ENCODE measurements at regions of chr4 and their contacts with region 1.

Region 1: DNA sequence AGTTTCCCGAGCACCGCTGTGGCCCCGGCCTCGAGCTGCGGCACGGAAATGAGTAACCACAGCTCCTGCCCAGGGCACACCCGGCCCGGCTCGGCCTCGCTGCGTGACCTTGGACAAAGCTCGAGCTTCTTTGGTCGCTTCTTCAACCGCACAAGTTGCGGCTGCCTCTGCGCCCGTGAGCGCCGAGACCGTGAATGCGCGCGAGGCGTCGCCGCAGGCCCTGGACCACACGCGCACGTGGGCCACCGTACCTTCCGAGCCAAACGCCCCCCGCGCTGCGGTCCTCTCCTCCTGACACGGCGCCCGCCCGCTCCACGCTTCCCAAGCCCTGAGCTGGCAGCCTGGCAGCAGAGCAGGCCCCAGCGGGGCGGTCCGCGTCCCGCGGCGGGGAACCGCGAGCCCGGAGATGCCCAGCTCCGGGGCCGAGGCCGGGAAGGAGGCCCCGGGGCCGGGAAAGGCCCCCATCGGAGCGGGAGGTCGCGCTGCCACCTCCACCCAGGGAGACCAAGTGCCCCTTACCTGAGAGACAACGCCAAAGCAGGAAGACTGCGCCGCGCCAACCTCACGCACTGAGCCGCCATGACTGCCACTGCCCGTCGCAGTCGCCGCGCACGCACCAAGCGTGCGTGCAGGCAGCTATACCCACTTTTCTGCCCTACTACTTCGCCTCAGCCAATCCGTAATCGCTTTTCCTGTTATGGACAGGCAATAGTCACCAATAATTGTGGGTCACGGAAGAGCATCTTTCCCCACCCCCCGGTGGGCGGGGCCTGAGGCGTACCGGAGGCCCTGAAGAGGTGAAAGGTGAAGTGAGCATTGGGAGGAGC is at the start of gene GRPEL1:
- DNase-seq: peak; percentile 100
- ATAC-seq: peak; percentile 88
- H3K4me3 ChIP-seq: peak within 1 kb of the TSS; percentile 76
- H3K4me3 Mint-ChIP-seq: peak within 1 kb of the TSS; percentile 97
- H3K27ac ChIP-seq: peak within 1 kb of the TSS; percentile 71 to 78
- H3K27ac Mint-ChIP-seq: peak within 1 kb of the TSS; percentile 93
- H3K4me1 ChIP-seq: peaks cover 45% of the 10 kb centered on the region
- H3K4me1 Mint-ChIP-seq: peaks cover 60% of the 10 kb centered on the region
- H3K27me3 ChIP-seq: no peaks in the 10 kb centered on the region
- H3K27me3 Mint-ChIP-seq: no peaks in the 10 kb centered on the region
- CTCF ChIP-seq: no peak
- total RNA-seq, gene GRPEL1: 55.6 to 58.6 TPM

Region 2: GRCh38 chr4:6688879-6689505 is 378.7 kb before region 1 on chr4:
- CTCF ChIA-PET with region 1: no interaction called
- POLR2A ChIA-PET with region 1: interaction called, 11 read pairs
- intact Hi-C with region 1: no loop called
- DNase-seq: peak; percentile 48 to 85 (median 69)
- ATAC-seq: peak; percentile 75
- H3K4me3 ChIP-seq: peak overlapping the region; percentile 58
- H3K4me3 Mint-ChIP-seq: peak overlapping the region; percentile 89
- H3K27ac ChIP-seq: peak overlapping the region; percentile 34 to 82
- H3K27ac Mint-ChIP-seq: peak overlapping the region; percentile 91
- H3K4me1 ChIP-seq: peaks cover 90% of the 10 kb centered on the region
- H3K4me1 Mint-ChIP-seq: peaks cover 71% of the 10 kb centered on the region
- H3K27me3 ChIP-seq: no peaks in the 10 kb centered on the region
- H3K27me3 Mint-ChIP-seq: no peaks in the 10 kb centered on the region
- CTCF ChIP-seq: no peak

Region 3: DNA sequence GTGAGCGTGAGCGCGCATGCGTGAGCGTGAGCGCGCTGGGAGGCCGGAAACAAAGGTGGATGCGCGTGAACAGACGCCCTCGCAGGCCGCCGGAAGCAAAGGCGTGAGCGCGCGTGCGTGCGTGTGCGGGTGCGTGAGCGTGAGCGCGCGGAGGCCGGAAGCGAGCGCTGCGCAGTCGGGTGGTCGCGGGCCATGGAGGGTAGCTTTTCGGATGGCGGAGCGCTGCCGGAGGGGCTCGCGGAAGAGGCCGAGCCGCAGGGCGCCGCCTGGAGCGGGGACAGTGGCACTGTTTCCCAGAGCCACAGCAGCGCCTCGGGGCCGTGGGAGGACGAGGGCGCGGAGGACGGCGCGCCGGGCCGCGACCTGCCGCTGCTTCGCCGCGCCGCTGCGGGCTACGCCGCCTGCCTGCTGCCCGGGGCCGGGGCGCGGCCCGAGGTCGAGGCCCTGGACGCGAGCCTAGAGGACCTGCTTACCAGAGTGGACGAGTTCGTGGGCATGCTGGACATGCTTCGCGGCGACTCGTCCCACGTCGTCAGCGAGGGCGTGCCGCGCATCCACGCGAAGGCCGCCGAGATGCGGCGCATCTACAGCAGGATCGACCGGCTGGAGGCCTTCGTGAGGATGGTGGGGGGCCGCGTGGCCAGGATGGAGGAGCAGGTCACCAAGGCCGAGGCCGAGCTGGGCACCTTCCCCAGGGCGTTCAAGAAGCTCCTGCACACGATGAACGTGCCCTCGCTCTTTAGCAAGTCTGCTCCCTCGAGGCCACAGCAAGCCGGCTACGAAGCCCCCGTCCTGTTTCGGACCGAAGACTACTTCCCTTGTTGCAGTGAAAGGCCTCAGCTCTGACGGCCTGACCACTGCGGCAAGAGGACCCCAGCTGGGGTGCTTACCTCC is 351.4 kb before region 1 on chr4 and contains the start of gene BLOC1S4:
- CTCF ChIA-PET with region 1: interaction called, 12 read pairs
- POLR2A ChIA-PET with region 1: interaction called, 44 read pairs
- intact Hi-C with region 1: loop called (anchors 1 kb)
- DNase-seq: peak; percentile 79 to 98 (median 88)
- ATAC-seq: peak; percentile 79
- H3K4me3 ChIP-seq: peak within 1 kb of the TSS; percentile 95
- H3K4me3 Mint-ChIP-seq: peak within 1 kb of the TSS; percentile 99
- H3K27ac ChIP-seq: peak within 1 kb of the TSS; percentile 82 to 85
- H3K27ac Mint-ChIP-seq: peak within 1 kb of the TSS; percentile 99
- H3K4me1 ChIP-seq: peaks cover 31% of the 10 kb centered on the region
- H3K4me1 Mint-ChIP-seq: peaks cover 39% of the 10 kb centered on the region
- H3K27me3 ChIP-seq: no peaks in the 10 kb centered on the region
- H3K27me3 Mint-ChIP-seq: no peaks in the 10 kb centered on the region
- CTCF ChIP-seq: no peak
- total RNA-seq, gene BLOC1S4: 24.6 to 27.6 TPM

Region 4: DNA sequence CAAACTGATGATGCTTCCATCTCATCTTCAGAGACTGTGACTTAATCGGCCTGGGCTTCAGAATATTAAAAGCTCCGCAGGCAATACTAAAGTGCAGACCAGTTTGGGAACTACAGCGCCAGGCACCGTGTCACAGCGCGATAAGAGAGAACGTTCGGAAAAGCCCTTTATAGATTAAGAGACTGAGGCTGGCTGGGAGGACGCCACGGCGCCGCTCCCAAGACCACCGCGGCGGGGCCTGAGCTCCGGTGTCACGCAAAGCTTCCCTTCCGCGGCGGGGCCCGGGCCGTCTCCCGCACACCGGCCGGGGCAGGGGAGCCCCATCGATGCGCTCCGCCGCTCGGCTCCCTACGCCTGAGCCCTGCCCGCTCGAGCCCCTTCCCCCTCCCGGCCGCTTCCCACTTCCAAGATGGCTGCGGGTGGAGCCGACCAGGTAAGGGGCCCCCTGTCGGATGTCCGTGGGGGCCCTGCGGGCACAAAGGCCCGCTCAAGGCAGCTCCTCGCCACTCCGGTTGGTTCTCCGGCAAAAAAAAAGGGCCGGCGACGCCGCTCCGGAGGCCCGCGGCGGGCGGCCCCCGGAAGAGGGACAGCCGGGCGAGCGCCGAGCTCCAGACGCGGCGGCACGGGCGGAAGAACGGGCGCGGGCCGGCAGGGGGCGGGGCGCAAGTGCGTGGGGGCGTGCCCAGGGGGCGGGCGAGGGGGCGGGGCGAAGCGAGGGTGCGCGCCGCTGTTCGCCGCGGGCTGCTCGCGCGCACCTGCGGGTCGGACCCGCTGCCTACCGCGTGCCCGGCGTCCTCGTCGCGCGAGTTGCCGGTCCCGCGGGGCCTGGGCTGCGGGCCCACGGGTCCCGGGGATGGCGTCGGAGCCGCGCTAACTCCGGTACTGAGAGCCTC is 158.3 kb before region 1 on chr4 and contains the start of gene TBC1D14:
- CTCF ChIA-PET with region 1: interaction called, 6 read pairs
- POLR2A ChIA-PET with region 1: interaction called, 39 read pairs
- intact Hi-C with region 1: loop called (anchors 1 kb)
- DNase-seq: peak; percentile 77 to 93 (median 84)
- ATAC-seq: peak; percentile 88
- H3K4me3 ChIP-seq: peak within 1 kb of the TSS; percentile 91
- H3K4me3 Mint-ChIP-seq: peak within 1 kb of the TSS; percentile 96
- H3K27ac ChIP-seq: peak within 1 kb of the TSS; percentile 92 to 96
- H3K27ac Mint-ChIP-seq: peak within 1 kb of the TSS; percentile 90
- H3K4me1 ChIP-seq: peaks cover 61% of the 10 kb centered on the region
- H3K4me1 Mint-ChIP-seq: peaks cover 48% of the 10 kb centered on the region
- H3K27me3 ChIP-seq: no peaks in the 10 kb centered on the region
- H3K27me3 Mint-ChIP-seq: no peaks in the 10 kb centered on the region
- CTCF ChIP-seq: no peak
- total RNA-seq, gene TBC1D14: 31.2 to 34.1 TPM

Region 5: GRCh38 chr4:6974138-6974848 is 93.4 kb before region 1 on chr4:
- CTCF ChIA-PET with region 1: interaction called, 15 read pairs
- POLR2A ChIA-PET with region 1: interaction called, 4 read pairs
- intact Hi-C with region 1: loop called (anchors 1 to 2 kb)
- DNase-seq: peak; percentile 56 to 89 (median 77)
- ATAC-seq: peak; percentile 98
- H3K4me3 ChIP-seq: no peak overlapping the region
- H3K4me3 Mint-ChIP-seq: no peak overlapping the region
- H3K27ac ChIP-seq: no peak overlapping the region
- H3K27ac Mint-ChIP-seq: peak overlapping the region; percentile 49
- H3K4me1 ChIP-seq: peaks cover 6% of the 10 kb centered on the region
- H3K4me1 Mint-ChIP-seq: peaks cover 15% of the 10 kb centered on the region
- H3K27me3 ChIP-seq: no peaks in the 10 kb centered on the region
- H3K27me3 Mint-ChIP-seq: no peaks in the 10 kb centered on the region
- CTCF ChIP-seq: peak; percentile 93

Region 6: GRCh38 chr4:7042697-7043464 is 24.8 kb before region 1 on chr4 and contains the start of gene TADA2B:
- CTCF ChIA-PET with region 1: interaction called, 55 read pairs
- POLR2A ChIA-PET with region 1: interaction called, 156 read pairs
- intact Hi-C with region 1: loop called (anchors 1 kb)
- DNase-seq: peak; percentile 72 to 97 (median 89)
- ATAC-seq: peak; percentile 76
- H3K4me3 ChIP-seq: peak within 1 kb of the TSS; percentile 87
- H3K4me3 Mint-ChIP-seq: peak within 1 kb of the TSS; percentile 93
- H3K27ac ChIP-seq: peak within 1 kb of the TSS; percentile 44 to 81
- H3K27ac Mint-ChIP-seq: peak within 1 kb of the TSS; percentile 82
- H3K4me1 ChIP-seq: peaks cover 55% of the 10 kb centered on the region
- H3K4me1 Mint-ChIP-seq: peaks cover 57% of the 10 kb centered on the region
- H3K27me3 ChIP-seq: no peaks in the 10 kb centered on the region
- H3K27me3 Mint-ChIP-seq: no peaks in the 10 kb centered on the region
- CTCF ChIP-seq: peak; percentile 22
- total RNA-seq, gene TADA2B: 41.5 to 44.6 TPM